ENCODE measurements at regions of chr18 and their contacts with region 1.

Region 1: DNA sequence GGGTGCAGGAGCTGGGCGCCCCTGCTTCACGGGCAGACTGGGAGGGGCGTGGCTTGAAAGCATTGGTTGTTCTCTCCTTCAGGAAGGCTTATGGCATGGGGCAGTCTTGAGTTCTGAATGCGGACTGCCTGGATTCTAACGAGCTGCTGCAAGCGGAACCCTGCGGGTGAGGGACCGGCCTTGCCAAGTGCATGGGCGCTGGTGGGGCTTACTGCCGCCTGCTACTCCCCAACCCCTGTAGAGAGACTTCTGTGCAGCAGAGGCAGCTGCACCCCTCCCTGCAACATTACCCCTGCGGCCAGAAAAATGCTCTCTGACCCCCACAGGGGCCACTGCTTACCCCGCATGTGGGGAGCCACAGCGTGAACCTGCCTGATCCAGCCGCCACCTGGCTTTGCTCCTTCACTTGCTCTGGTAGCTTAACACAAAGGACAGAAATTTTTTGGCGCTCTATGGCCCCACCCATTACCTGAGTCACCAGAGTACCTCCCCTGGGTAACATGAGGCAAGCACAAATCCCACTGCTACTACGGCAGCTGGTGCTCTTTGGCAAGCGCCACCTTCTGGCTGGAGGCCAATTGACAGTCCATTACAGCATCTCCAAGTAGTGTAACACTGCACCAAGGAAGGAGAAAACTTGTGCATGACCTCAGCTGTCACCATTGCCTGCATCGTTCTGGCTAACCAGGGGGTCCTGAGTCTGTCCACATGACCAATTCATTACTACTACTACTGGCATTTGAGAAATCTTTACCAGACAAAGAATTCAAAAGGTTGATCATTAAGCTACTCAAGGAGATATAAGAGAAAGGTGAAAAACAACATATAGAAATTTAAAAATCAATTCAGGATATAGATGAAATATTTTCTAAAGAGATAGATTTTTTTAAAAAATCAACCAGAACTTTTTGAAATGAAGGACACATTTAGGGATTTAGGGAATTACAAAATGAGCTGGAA is 35.4 kb downstream of the MYL12B start:
- DNase-seq: peak; percentile 87
- ATAC-seq: peak; percentile 98
- H3K4me3 Mint-ChIP-seq: peak overlapping the region; percentile 96
- H3K27ac Mint-ChIP-seq: peak overlapping the region; percentile 82
- H3K4me1 Mint-ChIP-seq: peaks cover 4% of the 10 kb centered on the region
- H3K27me3 Mint-ChIP-seq: peaks cover 27% of the 10 kb centered on the region

Region 2: DNA sequence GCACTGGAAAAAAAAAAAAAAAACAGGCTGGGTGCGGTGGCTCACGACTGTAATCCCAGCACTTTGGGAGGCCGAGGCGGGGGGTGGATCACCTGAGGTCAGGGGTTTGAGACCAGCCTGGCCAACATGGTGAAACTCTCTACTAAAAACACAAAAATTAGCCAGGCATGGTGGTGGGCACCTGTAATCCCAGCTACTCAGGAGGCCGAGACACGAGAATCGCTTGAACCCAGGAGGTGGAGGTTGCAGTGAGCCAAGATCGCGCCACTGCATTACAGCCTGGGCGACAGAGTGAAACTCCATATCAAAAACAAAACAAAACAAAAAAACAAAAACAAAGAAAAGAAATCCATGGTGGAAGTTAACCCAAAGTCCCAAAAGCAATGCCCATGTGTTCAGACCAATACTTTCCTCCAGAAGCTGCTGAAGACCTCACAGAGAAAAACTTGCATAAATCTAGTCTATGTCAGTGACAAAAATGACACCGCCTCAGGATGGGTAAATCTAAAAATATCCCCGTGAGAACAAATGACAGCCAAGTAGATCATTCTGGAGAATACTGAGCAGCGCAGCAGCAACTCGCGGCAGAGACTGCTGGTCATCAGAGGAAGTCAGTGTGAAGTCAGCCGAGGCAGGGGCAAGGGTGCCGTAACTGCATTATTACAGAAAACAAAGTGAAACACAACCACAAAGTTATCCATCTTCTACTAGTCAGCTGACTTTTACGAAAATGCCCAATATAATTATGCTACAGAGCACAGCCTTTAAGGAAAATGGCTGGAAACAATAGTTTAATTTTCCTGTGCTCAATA is 325.4 kb before region 1 on chr18:
- POLR2A ChIA-PET with region 1: no interaction called
- DNase-seq: peak; percentile 59
- ATAC-seq: peak; percentile 80
- H3K4me3 Mint-ChIP-seq: peak overlapping the region; percentile 91
- H3K27ac Mint-ChIP-seq: peak overlapping the region; percentile 95
- H3K4me1 Mint-ChIP-seq: peaks cover 77% of the 10 kb centered on the region
- H3K27me3 Mint-ChIP-seq: no peaks in the 10 kb centered on the region

Region 3: DNA sequence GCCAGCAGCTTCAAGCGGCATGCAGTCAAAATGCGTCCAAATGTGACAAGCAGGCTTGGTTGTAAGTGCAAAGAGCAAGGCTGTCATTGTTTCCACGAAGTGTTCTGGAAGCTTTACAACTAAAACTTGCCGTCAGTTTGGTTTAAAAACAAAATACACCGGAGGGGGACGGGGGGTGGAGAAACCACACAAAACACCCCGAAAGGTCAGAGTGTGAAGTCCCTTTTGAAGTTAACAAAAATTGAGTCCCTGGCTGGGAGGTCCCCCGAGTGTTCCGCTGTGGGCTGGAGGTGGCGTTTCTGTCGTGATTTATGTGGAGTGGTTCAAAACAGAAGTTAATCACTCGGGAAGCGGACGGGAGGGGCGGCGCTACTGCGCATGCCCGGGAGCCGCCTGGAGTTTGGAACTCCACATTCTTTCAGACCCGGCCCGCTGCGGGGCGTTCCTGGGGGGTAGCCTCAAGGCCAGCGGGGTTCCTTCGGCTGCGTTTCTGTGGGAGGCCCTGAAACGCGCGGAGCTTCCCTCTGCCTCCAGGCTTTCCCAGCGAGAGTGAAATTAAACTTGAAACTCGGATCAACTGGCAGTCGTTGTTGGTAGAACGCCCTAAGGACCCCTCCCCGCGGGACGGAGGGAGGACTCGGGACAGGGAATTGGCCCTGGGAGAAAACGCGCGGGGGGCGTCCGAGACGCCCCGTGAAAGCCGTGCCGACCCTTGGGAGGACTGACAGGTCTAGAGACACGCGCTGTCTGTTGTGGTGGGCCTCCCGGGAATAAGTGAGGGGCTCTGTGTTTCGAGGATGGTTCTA is 154.1 kb after region 1 on chr18:
- POLR2A ChIA-PET with region 1: interaction called, 17 read pairs
- DNase-seq: peak; percentile 77
- ATAC-seq: no peak
- H3K4me3 Mint-ChIP-seq: peak overlapping the region; percentile 81
- H3K27ac Mint-ChIP-seq: peak overlapping the region; percentile 79
- H3K4me1 Mint-ChIP-seq: peaks cover 25% of the 10 kb centered on the region
- H3K27me3 Mint-ChIP-seq: no peaks in the 10 kb centered on the region

Measured in activated naive CD8-positive, alpha-beta T cell treated with anti-CD3 and anti-CD28 coated beads, Interleukin-2, amount 10 ng/mL, durations not matched to agents 7 days and 5 days (primary cell).